ENCODE measurements at regions of chr1 and their contacts with region 1.

Region 1: GRCh38 chr1:236759252-236759859 is 35.7 kb upstream of the MTR start:
- DNase-seq: peak; percentile 51
- H3K4me3 ChIP-seq: no peak overlapping the region
- H3K27ac ChIP-seq: no peak overlapping the region
- H3K4me1 ChIP-seq: no peaks in the 10 kb centered on the region
- H3K27me3 ChIP-seq: no peaks in the 10 kb centered on the region
- CTCF ChIP-seq: peak; percentile 49 to 62
- POLR2A ChIP-seq: no peak

Region 2: DNA sequence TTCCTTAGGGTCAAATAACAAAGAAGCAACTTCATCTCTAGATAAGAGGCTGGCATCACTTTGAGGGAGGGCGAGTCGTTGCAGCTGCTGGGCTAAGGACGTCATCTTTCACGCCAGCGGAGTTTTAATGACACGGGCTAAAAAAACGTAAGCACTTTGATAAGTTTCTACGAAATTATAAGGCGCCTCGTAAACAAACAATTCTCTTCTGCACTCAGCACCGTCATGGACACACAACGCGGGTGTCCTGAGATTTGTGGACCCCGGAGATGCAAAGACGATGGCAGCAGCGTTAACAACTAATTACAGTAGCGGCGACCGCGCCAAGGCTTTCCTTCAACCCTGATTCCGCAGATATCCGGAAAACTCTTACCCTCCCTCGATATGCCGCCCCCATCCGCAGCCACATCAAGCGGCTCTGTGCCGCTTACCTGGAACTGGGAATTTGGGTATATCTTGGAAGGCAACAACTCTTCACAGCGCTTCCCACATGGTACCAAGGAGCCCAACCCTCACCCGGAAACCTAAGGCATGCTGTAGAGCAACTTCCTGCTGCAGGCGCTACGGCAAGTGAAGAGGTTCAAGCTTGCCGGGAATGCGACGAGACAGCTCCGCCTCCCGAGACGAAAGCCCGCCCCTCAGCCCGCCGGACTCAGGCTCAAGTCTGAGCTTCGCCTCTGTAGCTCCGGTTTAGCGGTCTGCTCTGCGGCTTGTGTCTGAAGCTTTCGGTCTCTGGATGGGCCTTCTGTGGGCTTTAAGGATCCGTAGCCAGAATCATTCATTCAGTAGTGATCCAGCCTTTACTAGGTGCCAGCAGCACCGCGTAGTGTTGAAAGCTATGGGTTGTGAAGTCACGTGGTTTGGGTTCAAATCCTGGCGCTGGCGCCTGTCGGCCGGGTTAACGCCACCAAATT is 155.1 kb before region 1 on chr1 and contains the start of gene HEATR1:
- CTCF ChIA-PET with region 1: interaction called, 13 read pairs
- POLR2A ChIA-PET with region 1: no interaction called
- dilution Hi-C with region 1: no loop called
- intact Hi-C with region 1: no loop called
- DNase-seq: peak; percentile 97
- H3K4me3 ChIP-seq: peak within 1 kb of the TSS; percentile 64 to 86 (median 73)
- H3K27ac ChIP-seq: peak within 1 kb of the TSS; percentile 55
- H3K4me1 ChIP-seq: peaks cover 14% of the 10 kb centered on the region
- H3K27me3 ChIP-seq: no peaks in the 10 kb centered on the region
- CTCF ChIP-seq: no peak
- POLR2A ChIP-seq: peak; percentile 88
- total RNA-seq, gene HEATR1: 53.8 and 62.0 TPM in 2 replicates

Region 3: GRCh38 chr1:236716160-236716559 is 43.2 kb before region 1 on chr1:
- CTCF ChIA-PET with region 1: interaction called, 10 read pairs
- POLR2A ChIA-PET with region 1: no interaction called
- dilution Hi-C with region 1: no loop called
- intact Hi-C with region 1: no loop called
- DNase-seq: peak; percentile 74
- H3K4me3 ChIP-seq: no peak overlapping the region
- H3K27ac ChIP-seq: no peak overlapping the region
- H3K4me1 ChIP-seq: no peaks in the 10 kb centered on the region
- H3K27me3 ChIP-seq: no peaks in the 10 kb centered on the region
- CTCF ChIP-seq: no peak
- POLR2A ChIP-seq: no peak

Region 4: GRCh38 chr1:236748471-236748870 is 10.9 kb before region 1 on chr1:
- CTCF ChIA-PET with region 1: interaction called, 28 read pairs
- POLR2A ChIA-PET with region 1: no interaction called
- dilution Hi-C with region 1: no loop called
- intact Hi-C with region 1: no loop called
- DNase-seq: no peak
- H3K4me3 ChIP-seq: no peak overlapping the region
- H3K27ac ChIP-seq: no peak overlapping the region
- H3K4me1 ChIP-seq: no peaks in the 10 kb centered on the region
- H3K27me3 ChIP-seq: no peaks in the 10 kb centered on the region
- CTCF ChIP-seq: peak; percentile 9
- POLR2A ChIP-seq: no peak

Region 5: GRCh38 chr1:236786453-236786852 is 27.1 kb after region 1 on chr1:
- CTCF ChIA-PET with region 1: interaction called, 11 read pairs
- POLR2A ChIA-PET with region 1: no interaction called
- dilution Hi-C with region 1: no loop called
- intact Hi-C with region 1: no loop called
- DNase-seq: no peak
- H3K4me3 ChIP-seq: no peak overlapping the region
- H3K27ac ChIP-seq: no peak overlapping the region
- H3K4me1 ChIP-seq: no peaks in the 10 kb centered on the region
- H3K27me3 ChIP-seq: peaks cover 0 to 4% of the 10 kb centered on the region in 2 experiments
- CTCF ChIP-seq: no peak
- POLR2A ChIP-seq: no peak

Region 6: GRCh38 chr1:236868625-236869467 is 109.5 kb after region 1 on chr1:
- CTCF ChIA-PET with region 1: interaction called, 9 read pairs
- POLR2A ChIA-PET with region 1: no interaction called
- dilution Hi-C with region 1: no loop called
- intact Hi-C with region 1: loop called (anchors 1 kb)
- DNase-seq: peak; percentile 69
- H3K4me3 ChIP-seq: no peak overlapping the region
- H3K27ac ChIP-seq: no peak overlapping the region
- H3K4me1 ChIP-seq: no peaks in the 10 kb centered on the region
- H3K27me3 ChIP-seq: no peaks in the 10 kb centered on the region
- CTCF ChIP-seq: peak; percentile 85 to 97
- POLR2A ChIP-seq: no peak

Region 7: DNA sequence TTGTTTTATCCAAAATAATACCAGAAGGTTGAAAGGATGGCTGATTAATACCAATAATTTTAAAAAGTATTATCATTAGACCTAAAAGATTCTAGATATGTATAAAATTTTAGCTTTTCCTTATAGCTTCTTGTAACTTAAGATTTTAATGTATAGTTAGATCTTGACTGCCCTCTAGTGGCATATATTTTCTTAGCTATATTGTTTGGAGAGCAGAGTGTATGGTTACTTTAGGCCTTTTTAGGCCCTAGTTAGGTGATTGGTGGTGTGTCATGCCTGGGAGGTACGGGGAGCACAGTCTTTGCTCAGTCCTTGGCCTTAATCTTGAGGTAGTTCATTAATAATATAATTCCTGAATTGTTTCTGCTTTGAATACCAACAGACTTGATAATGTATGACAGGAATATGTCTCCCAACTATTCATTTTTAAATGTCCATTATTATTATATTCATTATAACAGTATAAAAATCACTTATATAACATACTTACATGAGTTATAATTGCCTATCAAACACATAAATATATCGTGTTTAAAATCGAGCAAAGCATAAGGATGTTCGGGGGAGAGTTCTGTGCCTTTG is 803.0 kb after region 1 on chr1:
- CTCF ChIA-PET with region 1: interaction called, 20 read pairs
- POLR2A ChIA-PET with region 1: no interaction called
- dilution Hi-C with region 1: no loop called
- intact Hi-C with region 1: loop called (anchors 2 kb)
- DNase-seq: peak; percentile 44
- H3K4me3 ChIP-seq: no peak overlapping the region
- H3K27ac ChIP-seq: no peak overlapping the region
- H3K4me1 ChIP-seq: no peaks in the 10 kb centered on the region
- H3K27me3 ChIP-seq: no peaks in the 10 kb centered on the region
- CTCF ChIP-seq: peak; percentile 26 to 43
- POLR2A ChIP-seq: no peak

Measured in endothelial cell of umbilical vein (primary cell).